Endothelial cell of umbilical vein (primary cell): ENCODE measurements at regions of chr4 and their contacts with region 1.

Region 1: DNA sequence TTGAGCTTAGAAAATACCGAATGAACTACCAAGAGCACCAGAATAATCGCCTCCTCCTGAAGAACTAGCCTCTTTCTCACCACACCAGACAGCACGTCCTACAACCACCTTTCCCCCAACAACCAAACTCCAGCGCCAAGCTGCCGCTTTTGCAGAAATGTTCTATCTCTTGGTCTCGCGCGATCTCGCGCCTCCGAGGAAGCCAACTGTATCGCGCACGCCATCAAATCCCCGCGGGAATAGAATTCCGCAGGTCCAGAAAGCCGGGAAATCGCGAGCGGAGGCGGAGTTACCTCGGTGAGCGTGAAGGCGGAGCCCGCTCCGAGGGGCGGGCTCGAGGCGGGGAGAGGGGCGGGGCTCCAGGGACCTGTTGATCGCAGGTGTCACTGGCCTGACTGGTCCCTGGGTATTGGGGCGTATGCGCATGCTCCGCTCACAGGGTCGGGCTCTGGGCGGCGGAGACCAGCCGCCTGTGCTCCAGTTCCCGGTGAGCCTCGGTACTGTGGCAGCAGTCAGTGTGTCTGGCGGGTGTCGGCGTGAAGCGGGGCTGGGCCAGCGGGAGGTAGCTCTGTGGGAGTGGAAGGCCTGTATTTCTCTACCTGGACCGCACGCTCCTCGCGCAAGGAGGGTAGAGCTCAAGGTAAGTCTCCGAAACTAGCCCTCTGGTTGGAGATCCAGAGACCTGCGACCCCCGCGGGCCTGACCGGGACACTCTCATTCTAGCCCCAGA is at the start of gene USP53:
- DNase-seq: peak; percentile 99
- H3K4me3 ChIP-seq: peak within 1 kb of the TSS; percentile 58 to 99 (median 98)
- H3K27ac ChIP-seq: peak within 1 kb of the TSS; percentile 96
- H3K4me1 ChIP-seq: peaks cover 41% of the 10 kb centered on the region
- H3K27me3 ChIP-seq: no peaks in the 10 kb centered on the region
- CTCF ChIP-seq: no peak
- POLR2A ChIP-seq: peak; percentile 93
- total RNA-seq, gene USP53: 22.8 and 28.3 TPM in 2 replicates

Region 2: GRCh38 chr4:119041951-119042560 is 170.3 kb before region 1 on chr4:
- CTCF ChIA-PET with region 1: interaction called, 24 read pairs
- POLR2A ChIA-PET with region 1: interaction called, 4 read pairs
- dilution Hi-C with region 1: no loop called
- intact Hi-C with region 1: loop called (anchors 1 kb)
- DNase-seq: peak; percentile 86
- H3K4me3 ChIP-seq: no peak overlapping the region
- H3K27ac ChIP-seq: no peak overlapping the region
- H3K4me1 ChIP-seq: peaks cover 15% of the 10 kb centered on the region
- H3K27me3 ChIP-seq: no peaks in the 10 kb centered on the region
- CTCF ChIP-seq: peak; percentile 50
- POLR2A ChIP-seq: no peak

Region 3: DNA sequence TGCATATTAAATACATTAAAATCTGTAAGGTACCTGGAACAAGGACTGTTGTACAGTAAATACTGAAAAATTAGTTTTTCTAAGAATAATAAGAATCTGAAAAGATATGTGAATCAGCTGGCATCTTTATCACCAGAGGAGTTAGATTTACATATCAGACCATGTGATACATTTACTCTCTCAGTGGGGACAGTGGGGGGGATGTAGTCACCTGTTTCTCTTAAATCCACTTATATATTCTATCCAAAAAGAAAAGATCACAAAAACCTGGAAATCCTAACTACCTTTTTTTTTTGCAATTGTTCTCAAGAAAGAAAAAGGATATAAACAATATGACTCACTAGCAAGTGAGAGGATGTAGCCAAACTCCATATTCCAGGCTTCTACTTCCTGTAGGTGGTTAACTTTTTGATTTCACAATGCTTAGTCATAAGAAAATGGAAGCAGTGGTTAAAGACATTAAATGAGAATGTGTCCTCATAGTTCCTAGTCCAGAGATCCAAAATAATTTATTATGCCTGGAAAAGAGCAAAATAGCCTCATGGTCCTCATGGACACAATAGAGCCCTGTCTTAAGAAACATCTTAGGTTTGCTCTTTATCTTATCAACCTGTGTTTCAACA is 99.3 kb before region 1 on chr4:
- CTCF ChIA-PET with region 1: interaction called, 4 read pairs
- POLR2A ChIA-PET with region 1: interaction called, 8 read pairs
- dilution Hi-C with region 1: no loop called
- intact Hi-C with region 1: loop called (anchors 1 kb)
- DNase-seq: peak; percentile 91
- H3K4me3 ChIP-seq: peak overlapping the region in 1 of 3 experiments; percentile 22
- H3K27ac ChIP-seq: peak overlapping the region; percentile 91
- H3K4me1 ChIP-seq: peaks cover 38% of the 10 kb centered on the region
- H3K27me3 ChIP-seq: no peaks in the 10 kb centered on the region
- CTCF ChIP-seq: no peak
- POLR2A ChIP-seq: peak; percentile 39

Region 4: DNA sequence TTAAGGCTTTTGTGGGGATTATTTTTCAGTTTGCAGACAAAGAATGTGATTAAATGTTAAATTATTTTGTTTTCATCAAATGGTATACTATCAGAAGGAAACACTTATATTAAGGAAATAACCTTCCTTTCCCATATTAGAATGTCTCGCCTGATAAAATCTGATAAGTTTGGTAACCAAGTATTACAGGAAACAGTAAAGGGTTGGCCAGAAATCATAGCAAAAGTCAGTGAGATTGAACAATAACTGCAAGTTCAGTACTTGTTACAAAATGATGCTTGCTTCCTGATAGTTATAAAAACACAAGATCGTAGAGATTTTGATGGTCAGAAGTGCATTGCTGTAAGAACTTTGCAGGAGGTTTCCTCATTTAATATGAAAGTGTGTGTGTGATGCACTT is 69.0 kb after region 1 on chr4:
- CTCF ChIA-PET with region 1: interaction called, 5 read pairs
- POLR2A ChIA-PET with region 1: no interaction called
- dilution Hi-C with region 1: no loop called
- intact Hi-C with region 1: loop called (anchors 1 kb)
- DNase-seq: peak; percentile 97
- H3K4me3 ChIP-seq: peak overlapping the region in 1 of 3 experiments; percentile 26
- H3K27ac ChIP-seq: peak overlapping the region; percentile 72
- H3K4me1 ChIP-seq: peaks cover 57% of the 10 kb centered on the region
- H3K27me3 ChIP-seq: no peaks in the 10 kb centered on the region
- CTCF ChIP-seq: no peak
- POLR2A ChIP-seq: peak; percentile 63

Region 5: DNA sequence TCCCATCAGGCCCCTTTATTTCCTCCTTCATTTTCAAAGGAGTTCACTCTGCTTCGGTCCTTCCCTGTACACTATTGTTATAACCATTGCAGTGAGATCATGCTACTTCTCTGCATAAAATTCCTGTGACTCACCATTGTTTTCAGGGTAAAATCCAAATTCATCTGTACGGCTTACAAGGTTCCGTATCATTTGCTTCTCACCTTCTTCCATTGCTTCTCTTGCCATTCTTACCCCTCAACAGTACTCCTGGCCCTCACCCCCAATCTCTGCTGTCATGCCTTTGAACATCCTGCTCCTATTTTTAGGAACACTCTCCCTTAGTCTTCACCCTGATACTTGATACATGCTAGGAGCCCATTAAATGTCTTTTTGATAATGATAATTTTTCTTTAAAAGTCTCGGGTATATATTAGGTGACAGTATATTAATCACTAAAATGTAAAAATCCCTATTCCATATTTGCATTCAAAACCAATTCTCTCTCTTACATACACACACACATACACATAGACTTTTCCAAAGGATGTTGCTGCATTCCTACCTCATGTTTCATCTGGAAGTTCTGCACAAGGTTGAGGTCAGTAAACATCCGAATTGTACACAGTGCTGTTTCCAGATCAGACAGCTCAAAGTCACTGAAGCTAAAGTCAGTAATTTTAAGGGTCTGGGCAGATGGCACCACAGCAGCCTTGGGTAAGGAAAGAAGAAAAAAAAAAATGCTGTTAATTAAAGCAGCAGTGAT is 312.8 kb after region 1 on chr4:
- CTCF ChIA-PET with region 1: no interaction called
- POLR2A ChIA-PET with region 1: no interaction called
- dilution Hi-C with region 1: no loop called
- intact Hi-C with region 1: loop called (anchors 10 kb)
- DNase-seq: peak; percentile 90
- H3K4me3 ChIP-seq: peak overlapping the region in 1 of 3 experiments; percentile 63
- H3K27ac ChIP-seq: peak overlapping the region; percentile 99
- H3K4me1 ChIP-seq: peaks cover 47% of the 10 kb centered on the region
- H3K27me3 ChIP-seq: no peaks in the 10 kb centered on the region
- CTCF ChIP-seq: no peak
- POLR2A ChIP-seq: no peak